Activated T-helper 1 cell treated with anti-CD3 and anti-CD28 coated beads, Interleukin-12 subunit alpha, Interleukin-12 subunit beta, Interleukin-2, Interleukin-4 antibody, amounts not matched to agents 30 ng/mL and 10 ng/mL and 1 ng/mL, durations not matched to agents 14 hours and 24 hours and 36 hours (primary cell): ENCODE measurements at regions of chr13 and their contacts with region 1.

Region 1: DNA sequence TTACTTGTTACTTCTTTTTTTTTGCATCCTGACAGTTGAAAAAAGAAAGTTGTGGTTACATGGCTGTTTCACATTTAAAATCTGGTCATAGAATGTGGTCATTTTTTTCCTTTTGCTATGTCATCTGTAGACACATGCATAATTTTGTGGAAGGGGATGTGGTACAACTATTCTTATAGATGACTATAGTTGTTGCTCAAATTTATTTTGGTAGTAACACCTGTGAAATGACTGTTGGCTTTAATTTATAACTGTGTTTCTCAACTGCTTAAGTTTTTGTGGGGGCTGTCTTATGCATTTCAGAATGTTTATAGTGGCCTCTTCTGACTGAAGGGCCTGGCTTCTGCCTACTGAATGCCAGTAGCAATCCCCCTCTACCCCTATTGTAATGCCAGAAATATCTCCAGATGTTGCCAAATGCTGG is 130.5 kb downstream of the PAN3 start:
- DNase-seq: no peak
- H3K4me3 Mint-ChIP-seq: peak overlapping the region; percentile 49
- H3K27ac Mint-ChIP-seq: peak overlapping the region; percentile 70
- H3K4me1 Mint-ChIP-seq: peaks cover 27% of the 10 kb centered on the region
- H3K27me3 Mint-ChIP-seq: no peaks in the 10 kb centered on the region

Region 2: DNA sequence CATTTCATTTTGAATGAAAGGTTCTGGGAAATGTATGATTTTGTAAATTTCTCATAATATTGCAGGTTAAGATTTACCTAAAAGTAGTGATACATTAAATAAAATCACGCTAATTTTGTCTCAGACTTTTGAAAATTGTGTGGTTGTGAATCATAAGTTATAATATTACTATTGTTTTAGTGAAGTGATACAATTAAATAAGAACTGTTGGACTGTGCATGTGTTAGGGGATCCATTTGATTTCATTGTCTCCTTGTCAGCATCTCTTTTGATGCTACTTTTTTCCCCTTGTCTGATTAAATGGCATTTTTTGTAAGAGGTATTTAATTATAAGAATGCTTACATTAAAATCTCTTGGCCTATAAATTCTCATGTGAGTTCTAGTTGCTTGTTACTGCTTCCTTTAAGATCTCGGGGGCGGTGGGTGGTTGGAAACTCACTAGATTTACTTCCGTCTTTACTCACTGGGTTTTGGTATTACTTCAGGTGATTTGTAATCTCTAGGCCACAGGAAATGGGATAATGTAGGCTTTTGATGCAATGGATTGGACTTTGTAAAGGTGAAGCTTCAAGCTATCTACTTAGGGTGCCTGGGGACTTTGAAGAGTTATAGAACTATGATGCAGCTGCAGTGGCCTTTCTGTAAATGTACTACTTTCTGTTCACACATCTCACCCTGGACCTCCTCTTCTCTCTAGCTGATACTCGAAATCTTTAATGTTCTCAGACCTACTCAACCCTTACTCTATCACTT is 63.9 kb before region 1 on chr13:
- intact Hi-C with region 1: loop called (anchors 1 kb)
- DNase-seq: no peak
- H3K4me3 Mint-ChIP-seq: peak overlapping the region; percentile 43
- H3K27ac Mint-ChIP-seq: peak overlapping the region; percentile 54
- H3K4me1 Mint-ChIP-seq: peaks cover 26% of the 10 kb centered on the region
- H3K27me3 Mint-ChIP-seq: no peaks in the 10 kb centered on the region

Region 3: GRCh38 chr13:28239374-28239773 is 29.4 kb before region 1 on chr13:
- intact Hi-C with region 1: no loop called
- DNase-seq: no peak
- H3K4me3 Mint-ChIP-seq: no peak overlapping the region
- H3K27ac Mint-ChIP-seq: no peak overlapping the region
- H3K4me1 Mint-ChIP-seq: no peaks in the 10 kb centered on the region
- H3K27me3 Mint-ChIP-seq: no peaks in the 10 kb centered on the region